Activated T-helper 2 cell treated with anti-CD3 and anti-CD28 coated beads, Interferon-gamma antibody, Interleukin-2, Interleukin-4, amounts not matched to agents 10 μg/mL and 5 μg/mL and 100 μg/mL, durations not matched to agents 14 hours and 24 hours and 36 hours (primary cell): ENCODE measurements at regions of chr3 and their contacts with region 1.

Region 1: GRCh38 chr3:71026634-71027578 is 556.6 kb downstream of the FOXP1 start:
- DNase-seq: no peak
- H3K4me3 Mint-ChIP-seq: no peak overlapping the region
- H3K27ac Mint-ChIP-seq: peak overlapping the region; percentile 58
- H3K4me1 Mint-ChIP-seq: peaks cover 52% of the 10 kb centered on the region
- H3K27me3 Mint-ChIP-seq: no peaks in the 10 kb centered on the region

Region 2: GRCh38 chr3:70766301-70766700 is 260.6 kb before region 1 on chr3:
- intact Hi-C with region 1: no loop called
- DNase-seq: no peak
- H3K4me3 Mint-ChIP-seq: no peak overlapping the region
- H3K27ac Mint-ChIP-seq: no peak overlapping the region
- H3K4me1 Mint-ChIP-seq: peaks cover 2% of the 10 kb centered on the region
- H3K27me3 Mint-ChIP-seq: peaks cover 54% of the 10 kb centered on the region

Region 3: DNA sequence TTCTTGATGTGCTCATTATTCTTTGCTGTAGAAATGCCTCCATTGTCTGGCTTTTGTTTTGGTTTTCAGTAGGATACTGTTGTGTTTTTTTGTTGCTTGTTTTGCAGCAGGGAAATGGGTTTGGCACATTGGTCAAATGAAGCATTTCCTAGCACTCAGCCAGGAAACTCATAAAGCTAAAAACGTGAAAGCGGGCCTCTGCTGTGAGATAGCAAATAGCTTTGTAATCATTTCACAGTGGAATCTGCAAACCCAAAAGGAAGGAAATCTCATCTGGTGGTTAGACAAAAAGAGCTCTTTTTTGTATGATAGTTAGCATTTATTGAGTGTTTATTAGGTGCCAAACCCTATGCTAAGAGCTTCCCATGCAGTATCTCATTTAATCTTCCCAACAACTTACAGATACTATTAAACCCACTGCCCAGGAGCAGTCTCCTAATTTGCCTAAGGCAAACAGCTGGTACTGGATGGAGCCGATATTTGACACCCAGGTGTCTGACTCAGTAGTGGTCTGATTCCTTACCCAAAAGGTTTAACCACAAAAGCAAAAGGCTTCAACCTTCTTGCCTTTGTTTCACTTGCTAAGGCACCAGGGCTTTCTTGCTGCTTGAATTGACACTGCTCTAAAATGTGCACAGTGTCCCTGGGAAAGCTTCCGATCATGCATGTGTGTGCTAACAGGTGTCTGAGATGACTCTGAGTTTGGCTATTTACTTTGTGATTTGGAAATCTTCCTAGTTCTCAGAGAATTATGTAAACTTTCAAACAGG is 186.6 kb before region 1 on chr3:
- intact Hi-C with region 1: no loop called
- DNase-seq: no peak
- H3K4me3 Mint-ChIP-seq: no peak overlapping the region
- H3K27ac Mint-ChIP-seq: no peak overlapping the region
- H3K4me1 Mint-ChIP-seq: peaks cover 5% of the 10 kb centered on the region
- H3K27me3 Mint-ChIP-seq: peaks cover 26% of the 10 kb centered on the region

Region 4: GRCh38 chr3:71041371-71041770 is 14.5 kb after region 1 on chr3:
- intact Hi-C with region 1: loop called (anchors 2 kb)
- DNase-seq: no peak
- H3K4me3 Mint-ChIP-seq: no peak overlapping the region
- H3K27ac Mint-ChIP-seq: peak overlapping the region; percentile 9
- H3K4me1 Mint-ChIP-seq: peaks cover 57% of the 10 kb centered on the region
- H3K27me3 Mint-ChIP-seq: no peaks in the 10 kb centered on the region

Region 5: GRCh38 chr3:71416876-71417275 is 390.0 kb after region 1 on chr3:
- intact Hi-C with region 1: no loop called
- DNase-seq: no peak
- H3K4me3 Mint-ChIP-seq: no peak overlapping the region
- H3K27ac Mint-ChIP-seq: no peak overlapping the region
- H3K4me1 Mint-ChIP-seq: peaks cover 62% of the 10 kb centered on the region
- H3K27me3 Mint-ChIP-seq: no peaks in the 10 kb centered on the region